Naive thymus-derived CD4-positive, alpha-beta T cell (primary cell): ENCODE measurements at regions of chr9 and their contacts with region 1.

Region 1: GRCh38 chr9:37508834-37509206 is 23.1 kb downstream of the POLR1E start:
- DNase-seq: peak in 1 of 9 donors; percentile 28
- ATAC-seq: no peak
- H3K4me3 ChIP-seq: no peak overlapping the region
- H3K4me3 Mint-ChIP-seq: no peak overlapping the region
- H3K27ac ChIP-seq: no peak overlapping the region
- H3K27ac Mint-ChIP-seq: peak overlapping the region in 2 of 9 donors; percentile 11 to 47
- H3K4me1 ChIP-seq: peaks cover 0 to 15% of the 10 kb centered on the region in 2 donors
- H3K4me1 Mint-ChIP-seq: peaks cover 0 to 3% (median 0%) of the 10 kb centered on the region in 7 donors
- H3K27me3 ChIP-seq: no peaks in the 10 kb centered on the region
- H3K27me3 Mint-ChIP-seq: no peaks in the 10 kb centered on the region

Region 2: GRCh38 chr9:37415011-37415719 is 93.7 kb before region 1 on chr9:
- CTCF ChIA-PET with region 1: interaction called, 4 read pairs
- POLR2A ChIA-PET with region 1: no interaction called
- intact Hi-C with region 1: loop called in 1 of 2 experiments (anchors 1 kb)
- DNase-seq: peak; percentile 55 to 77 (median 70)
- ATAC-seq: peak; percentile 94
- H3K4me3 ChIP-seq: no peak overlapping the region
- H3K4me3 Mint-ChIP-seq: peak overlapping the region in 7 of 10 donors; percentile 27 to 72 (median 49)
- H3K27ac ChIP-seq: no peak overlapping the region
- H3K27ac Mint-ChIP-seq: peak overlapping the region in 4 of 9 donors; percentile 76 to 92 (median 84)
- H3K4me1 ChIP-seq: no peaks in the 10 kb centered on the region
- H3K4me1 Mint-ChIP-seq: peaks cover 5 to 11% (median 7%) of the 10 kb centered on the region in 7 donors
- H3K27me3 ChIP-seq: no peaks in the 10 kb centered on the region
- H3K27me3 Mint-ChIP-seq: peaks cover 0 to 7% (median 5%) of the 10 kb centered on the region in 5 donors

Region 3: GRCh38 chr9:37800631-37801286 is 291.9 kb after region 1 on chr9 and contains the start of gene DCAF10:
- CTCF ChIA-PET with region 1: no interaction called
- POLR2A ChIA-PET with region 1: no interaction called
- intact Hi-C with region 1: no loop called
- DNase-seq: peak; percentile 80 to 97 (median 87)
- ATAC-seq: peak; percentile 95
- H3K4me3 ChIP-seq: peak within 1 kb of the TSS; percentile 97
- H3K4me3 Mint-ChIP-seq: peak within 1 kb of the TSS; percentile 86 to 95 (median 93)
- H3K27ac ChIP-seq: peak within 1 kb of the TSS; percentile 69
- H3K27ac Mint-ChIP-seq: peak within 1 kb of the TSS; percentile 71 to 95 (median 90)
- H3K4me1 ChIP-seq: peaks cover 19 to 26% of the 10 kb centered on the region in 2 donors
- H3K4me1 Mint-ChIP-seq: peaks cover 24 to 55% (median 42%) of the 10 kb centered on the region in 7 donors
- H3K27me3 ChIP-seq: no peaks in the 10 kb centered on the region
- H3K27me3 Mint-ChIP-seq: no peaks in the 10 kb centered on the region
- total RNA-seq, gene DCAF10: 12.1 to 22.5 (median 21.3) TPM